Body of pancreas (tissue), 4 donors: ENCODE measurements at regions of chr7 and their contacts with region 1.

Region 1: GRCh38 chr7:47474937-47475878 is 106.7 kb downstream of the TNS3 start:
- DNase-seq: peak; percentile 96 to 99 (median 98)
- ATAC-seq: peak; percentile 86
- H3K4me3 ChIP-seq: no peak overlapping the region
- H3K27ac ChIP-seq: peak overlapping the region; percentile 89 to 97 (median 90)
- H3K4me1 ChIP-seq: peaks cover 98% of the 10 kb centered on the region
- H3K27me3 ChIP-seq: no peaks in the 10 kb centered on the region
- CTCF ChIP-seq: peak in 4 of 7 experiments; percentile 25 to 54 (median 50)
- POLR2A ChIP-seq: peak in 2 of 3 donors; percentile 88 to 90

Region 2: DNA sequence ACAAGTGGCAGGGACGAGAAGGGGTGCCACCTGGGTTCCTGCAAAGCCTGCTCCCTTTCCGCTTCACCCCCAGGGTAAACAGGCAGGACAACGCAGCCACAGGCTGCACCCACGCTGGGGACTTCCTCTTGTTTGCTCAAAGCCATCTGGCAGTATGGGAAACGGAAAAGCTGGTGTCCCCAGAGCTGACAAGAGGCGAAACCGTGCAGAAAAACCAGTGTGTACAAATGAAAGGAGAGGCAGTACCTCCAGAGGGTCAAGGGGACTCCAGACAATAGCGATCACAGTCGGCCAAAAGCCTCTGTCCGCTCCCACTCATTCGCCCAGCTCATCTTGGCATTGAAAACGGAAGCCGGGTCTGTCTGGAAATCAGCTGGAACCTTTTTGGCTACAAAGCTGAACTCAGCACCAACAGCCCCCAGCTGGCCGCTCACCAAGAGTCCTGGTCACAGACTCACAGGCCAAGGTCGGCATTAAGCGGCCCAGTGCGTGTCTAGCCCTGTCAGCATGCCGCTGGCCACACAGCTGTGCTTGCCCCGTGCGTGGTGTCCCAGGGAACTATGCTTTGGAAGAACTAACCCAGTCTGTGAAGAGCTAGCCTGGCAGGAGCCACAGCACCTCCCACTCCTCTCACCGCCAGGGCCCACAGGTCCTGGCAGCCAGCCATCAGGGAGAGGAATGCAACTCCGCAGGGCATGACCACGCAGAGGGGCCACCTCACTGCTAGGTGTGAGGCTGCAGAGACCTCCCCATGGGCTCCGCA is 96.3 kb after region 1 on chr7:
- intact Hi-C with region 1: loop called (anchors 10 kb)
- DNase-seq: peak; percentile 77 to 89 (median 88)
- ATAC-seq: peak; percentile 61
- H3K4me3 ChIP-seq: no peak overlapping the region
- H3K27ac ChIP-seq: peak overlapping the region; percentile 80 to 95 (median 92)
- H3K4me1 ChIP-seq: peaks cover 100% of the 10 kb centered on the region
- H3K27me3 ChIP-seq: no peaks in the 10 kb centered on the region
- CTCF ChIP-seq: peak in 4 of 7 experiments; percentile 19 to 42 (median 33)
- POLR2A ChIP-seq: peak in 2 of 3 donors; percentile 59 to 66